Activated CD4-positive, alpha-beta T cell treated with anti-CD3 and anti-CD28 coated beads for 36 hours (primary cell): ENCODE measurements at regions of chr17 and their contacts with region 1.

Region 1: DNA sequence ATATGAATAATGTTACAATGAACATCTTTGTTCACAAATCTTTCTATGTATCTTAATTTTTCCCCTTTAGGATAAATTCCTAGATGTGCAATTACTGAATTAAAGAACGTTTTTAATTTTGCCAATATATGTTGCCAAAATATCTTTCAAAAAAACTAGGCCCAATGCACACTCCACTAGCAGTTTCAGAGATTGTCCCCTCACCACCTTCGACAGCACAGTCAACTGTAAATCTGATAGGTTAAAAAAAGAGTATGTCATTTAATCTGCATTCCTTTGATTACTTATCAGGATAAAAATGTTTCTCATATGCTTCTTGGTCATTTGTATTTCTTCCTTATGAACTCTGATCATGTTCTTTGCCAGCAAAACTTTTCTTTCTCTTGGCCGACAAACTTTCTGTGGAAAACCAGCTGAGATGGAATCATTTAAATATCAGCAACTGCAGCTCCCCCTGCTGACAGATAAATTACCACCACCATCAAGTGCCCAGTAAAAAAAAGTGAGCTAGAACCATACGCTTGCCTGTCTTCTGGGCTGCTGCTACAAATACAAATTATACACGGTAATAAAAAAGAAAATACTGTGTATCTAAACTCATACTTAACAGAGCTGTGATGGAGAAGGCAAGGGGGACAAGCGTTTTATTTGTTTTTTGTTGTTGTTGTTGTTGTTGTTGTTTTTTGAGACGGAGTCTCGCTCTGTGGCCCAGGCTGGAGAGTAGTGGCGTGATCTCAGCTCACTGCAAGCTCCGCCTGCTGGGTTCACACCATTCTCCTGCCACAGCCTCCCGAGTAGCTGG is 19.6 kb upstream of the KANSL1 start:
- DNase-seq: peak; percentile 61
- ATAC-seq: peak; percentile 66
- H3K4me3 Mint-ChIP-seq: no peak overlapping the region
- H3K27ac Mint-ChIP-seq: no peak overlapping the region
- H3K4me1 Mint-ChIP-seq: peaks cover 23% of the 10 kb centered on the region
- H3K27me3 Mint-ChIP-seq: no peaks in the 10 kb centered on the region

Region 2: DNA sequence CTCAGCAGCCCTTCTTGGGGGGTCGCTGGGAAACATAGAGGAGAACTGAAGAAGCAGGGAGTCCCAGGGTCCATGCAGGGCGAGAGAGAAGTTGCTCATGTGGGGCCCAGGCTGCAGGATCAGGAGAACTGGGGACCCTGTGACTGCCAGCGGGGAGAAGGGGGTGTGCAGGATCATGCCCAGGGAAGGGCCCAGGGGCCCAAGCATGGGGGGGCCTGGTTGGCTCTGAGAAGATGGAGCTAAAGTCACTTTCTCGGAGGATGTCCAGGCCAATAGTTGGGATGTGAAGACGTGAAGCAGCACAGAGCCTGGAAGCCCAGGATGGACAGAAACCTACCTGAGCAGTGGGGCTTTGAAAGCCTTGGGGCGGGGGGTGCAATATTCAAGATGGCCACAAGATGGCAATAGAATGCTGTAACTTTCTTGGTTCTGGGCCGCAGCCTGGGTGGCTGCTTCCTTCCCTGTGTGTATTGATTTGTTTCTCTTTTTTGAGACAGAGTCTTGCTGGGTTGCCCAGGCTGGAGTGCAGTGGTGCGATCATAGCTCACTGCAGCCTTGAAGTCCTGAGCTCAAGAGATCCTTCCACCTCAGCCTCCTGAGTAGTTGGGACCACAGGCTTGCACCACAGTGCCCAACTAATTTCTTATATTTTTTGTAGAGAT is 210.4 kb before region 1 on chr17:
- CTCF ChIA-PET with region 1: interaction called, 16 read pairs
- POLR2A ChIA-PET with region 1: no interaction called
- intact Hi-C with region 1: loop called (anchors 1 to 5 kb)
- DNase-seq: peak; percentile 83
- ATAC-seq: peak; percentile 93
- H3K4me3 Mint-ChIP-seq: no peak overlapping the region
- H3K27ac Mint-ChIP-seq: no peak overlapping the region
- H3K4me1 Mint-ChIP-seq: no peaks in the 10 kb centered on the region
- H3K27me3 Mint-ChIP-seq: no peaks in the 10 kb centered on the region

Region 3: DNA sequence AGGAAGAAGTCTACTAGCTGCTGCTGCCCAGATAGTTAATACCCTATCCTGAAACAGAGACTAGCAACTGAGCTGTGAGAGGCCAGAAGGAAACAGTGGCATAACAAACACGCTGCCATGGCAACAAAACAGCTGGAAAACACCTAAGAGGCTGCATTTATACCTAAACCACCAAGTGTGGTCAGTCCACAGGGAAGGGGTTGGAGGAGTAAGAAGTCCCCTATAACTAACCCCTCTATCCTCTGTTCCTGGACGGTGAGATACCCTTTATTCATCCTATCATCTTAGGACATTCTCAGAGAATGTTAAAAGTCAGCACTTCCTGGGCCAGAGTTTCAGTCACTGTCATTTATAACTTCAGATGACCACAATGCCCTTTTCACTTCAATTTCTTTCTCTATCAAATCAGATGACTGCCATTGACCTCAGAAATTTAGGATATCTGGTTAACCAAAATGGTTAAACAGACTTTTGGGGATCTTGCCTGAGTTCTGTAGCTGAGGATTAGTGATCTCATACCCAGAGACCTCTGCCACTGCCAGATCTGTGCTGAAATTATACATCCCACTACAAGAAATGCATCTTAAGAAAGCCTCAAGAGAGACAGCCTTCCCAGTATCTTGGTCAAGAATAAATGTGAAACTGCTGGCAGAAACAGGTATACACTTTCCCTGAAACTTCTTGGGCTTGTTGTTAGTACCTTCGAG is 177.6 kb before region 1 on chr17:
- CTCF ChIA-PET with region 1: interaction called, 10 read pairs
- POLR2A ChIA-PET with region 1: no interaction called
- intact Hi-C with region 1: no loop called
- DNase-seq: peak; percentile 31
- ATAC-seq: peak; percentile 36
- H3K4me3 Mint-ChIP-seq: no peak overlapping the region
- H3K27ac Mint-ChIP-seq: peak overlapping the region; percentile 29
- H3K4me1 Mint-ChIP-seq: peaks cover 9% of the 10 kb centered on the region
- H3K27me3 Mint-ChIP-seq: no peaks in the 10 kb centered on the region

Region 4: DNA sequence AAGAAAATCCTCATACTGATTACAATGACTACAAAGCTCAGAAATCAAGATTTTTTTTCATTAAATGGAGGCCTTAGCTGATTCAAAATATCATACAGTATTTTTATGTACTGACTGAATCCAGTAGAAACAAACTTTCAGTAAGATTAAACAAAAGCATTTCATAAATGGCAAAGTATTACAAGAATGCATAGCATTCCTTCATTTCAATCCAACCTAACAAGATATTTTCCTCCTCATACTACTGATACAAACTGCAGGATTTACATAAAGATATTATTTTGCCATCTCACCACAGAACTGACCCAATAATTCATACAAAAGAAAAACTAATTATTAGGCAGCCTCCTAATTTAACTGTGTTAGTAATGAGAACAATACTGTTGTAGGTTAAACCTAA is 13.5 kb before region 1 on chr17:
- CTCF ChIA-PET with region 1: interaction called, 14 read pairs
- POLR2A ChIA-PET with region 1: no interaction called
- intact Hi-C with region 1: loop called in 1 of 2 experiments (anchors 1 kb)
- DNase-seq: no peak
- ATAC-seq: no peak
- H3K4me3 Mint-ChIP-seq: no peak overlapping the region
- H3K27ac Mint-ChIP-seq: no peak overlapping the region
- H3K4me1 Mint-ChIP-seq: peaks cover 55% of the 10 kb centered on the region
- H3K27me3 Mint-ChIP-seq: no peaks in the 10 kb centered on the region

Region 5: DNA sequence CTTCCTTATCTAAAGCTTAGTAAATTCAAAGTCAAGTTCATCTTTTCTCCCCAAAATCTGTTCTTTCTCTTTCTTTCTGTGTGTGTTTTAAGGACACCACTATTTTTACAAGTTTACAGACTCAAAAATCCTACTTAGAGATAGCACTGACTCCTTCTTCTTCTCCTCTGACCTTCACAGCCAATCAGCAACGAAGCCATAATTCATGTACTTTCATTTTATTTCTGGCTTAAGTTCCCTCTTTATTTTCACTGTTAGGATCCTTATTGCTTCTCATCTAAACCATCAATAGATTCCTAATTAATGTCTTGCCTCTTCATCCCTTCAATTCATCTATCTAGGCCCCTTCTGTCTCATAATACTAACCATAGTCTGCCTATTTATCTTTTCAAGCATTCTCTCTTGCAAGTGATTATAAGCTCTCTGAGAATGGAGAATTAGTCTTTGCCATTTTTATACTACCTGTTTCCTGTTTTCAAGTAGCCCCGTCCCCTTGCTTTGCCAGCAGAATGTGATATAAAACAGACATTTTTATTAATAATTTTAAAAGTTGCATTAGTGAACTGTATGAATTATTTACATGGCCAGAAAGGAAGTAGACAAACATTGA is 949.3 kb after region 1 on chr17:
- CTCF ChIA-PET with region 1: no interaction called
- POLR2A ChIA-PET with region 1: no interaction called
- intact Hi-C with region 1: no loop called
- DNase-seq: no peak
- ATAC-seq: no peak
- H3K4me3 Mint-ChIP-seq: no peak overlapping the region
- H3K27ac Mint-ChIP-seq: peak overlapping the region; percentile 14
- H3K4me1 Mint-ChIP-seq: peaks cover 19% of the 10 kb centered on the region
- H3K27me3 Mint-ChIP-seq: no peaks in the 10 kb centered on the region